Natural killer cell (primary cell): ENCODE measurements at regions of chr19 and their contacts with region 1.

Region 1: DNA sequence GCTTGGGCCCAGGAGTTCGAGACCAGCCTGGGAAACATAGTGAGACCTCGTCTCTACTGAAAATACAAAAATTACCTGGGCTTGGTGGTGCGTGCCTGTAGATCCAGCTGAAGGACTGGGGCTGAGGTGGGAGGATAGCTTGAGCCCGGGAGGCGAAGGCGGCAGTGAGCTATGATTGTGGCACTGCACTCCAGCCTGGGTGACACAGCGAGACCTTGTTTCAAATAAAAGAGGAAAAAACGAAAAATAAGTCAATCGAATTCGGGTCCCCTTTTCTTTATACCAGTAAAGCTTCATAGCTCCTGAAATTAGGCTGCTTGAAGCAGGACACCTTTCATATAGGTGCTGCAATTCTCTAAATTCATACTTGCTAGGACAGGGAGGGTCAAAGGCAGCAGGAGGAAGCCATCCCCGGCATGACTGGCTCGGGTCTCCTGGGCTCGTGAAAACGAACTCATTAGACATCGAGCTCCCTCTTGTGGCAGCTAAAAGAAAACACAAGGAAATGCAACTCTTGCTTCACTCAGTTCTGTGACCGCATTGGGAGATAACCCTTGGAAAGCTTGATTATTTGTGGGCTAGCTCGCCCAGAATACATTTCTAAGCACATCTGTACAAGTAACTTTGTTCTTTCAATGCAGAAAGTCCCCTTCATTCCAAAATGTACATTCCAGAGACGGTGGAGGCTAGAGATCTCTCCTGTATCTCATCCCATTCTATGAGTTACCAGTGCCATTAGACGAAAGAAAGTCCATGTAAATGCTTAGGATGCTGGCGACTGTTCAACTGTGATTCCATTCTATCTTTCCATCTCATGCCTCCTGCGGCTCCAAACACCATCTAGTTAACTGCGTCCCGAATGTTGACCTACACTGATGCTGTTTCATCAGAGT is 16.8 kb downstream of the FPR2 start:
- DNase-seq: peak in 1 of 2 donors; percentile 79
- ATAC-seq: peak; percentile 29 to 71 (median 67)
- H3K4me3 ChIP-seq: no peak overlapping the region
- H3K4me3 Mint-ChIP-seq: no peak overlapping the region
- H3K27ac ChIP-seq: no peak overlapping the region
- H3K27ac Mint-ChIP-seq: no peak overlapping the region
- H3K4me1 ChIP-seq: no peaks in the 10 kb centered on the region
- H3K4me1 Mint-ChIP-seq: peaks cover 5% of the 10 kb centered on the region in 2 donors
- H3K27me3 ChIP-seq: no peaks in the 10 kb centered on the region
- H3K27me3 Mint-ChIP-seq: peaks cover 28 to 50% of the 10 kb centered on the region in 2 donors
- CTCF ChIP-seq: peak; percentile 60

Region 2: DNA sequence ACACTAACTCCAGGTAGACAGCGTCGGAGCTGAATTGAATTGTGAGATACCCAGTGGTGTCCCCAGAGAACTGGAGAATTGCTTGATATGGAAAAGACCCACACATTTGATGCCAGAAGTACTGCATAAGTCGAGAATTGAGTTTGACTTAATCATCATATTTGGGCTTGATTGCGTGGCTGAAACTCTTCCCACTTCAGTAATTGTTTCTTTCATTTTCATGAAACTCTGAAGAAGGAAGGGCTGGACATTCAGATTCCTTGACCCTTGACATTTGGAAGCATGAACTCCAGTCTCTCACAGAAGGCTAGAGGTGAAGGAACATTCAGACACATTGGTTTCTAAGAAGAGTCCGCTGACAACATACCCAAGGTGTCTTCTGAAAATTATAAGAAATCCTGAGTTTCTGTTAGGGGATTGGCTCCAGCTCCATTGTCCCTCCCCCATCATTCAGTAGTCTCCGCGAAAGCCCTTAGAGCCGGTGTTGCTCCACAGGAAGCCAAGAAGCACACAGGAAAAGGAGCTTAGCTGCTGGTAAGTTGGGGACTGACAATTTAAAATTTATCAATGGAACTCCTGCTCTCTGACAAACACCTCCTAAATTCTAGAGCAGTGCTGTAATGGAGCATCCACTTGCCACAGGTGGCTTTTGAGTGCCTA is 17.0 kb before region 1 on chr19 and contains the start of gene FPR2:
- intact Hi-C with region 1: no loop called
- DNase-seq: no peak
- ATAC-seq: no peak
- H3K4me3 ChIP-seq: no peak within 1 kb of the TSS
- H3K4me3 Mint-ChIP-seq: no peak within 1 kb of the TSS
- H3K27ac ChIP-seq: no peak within 1 kb of the TSS
- H3K27ac Mint-ChIP-seq: no peak within 1 kb of the TSS
- H3K4me1 ChIP-seq: no peaks in the 10 kb centered on the region
- H3K4me1 Mint-ChIP-seq: peaks cover 0 to 5% of the 10 kb centered on the region in 2 donors
- H3K27me3 ChIP-seq: no peaks in the 10 kb centered on the region
- H3K27me3 Mint-ChIP-seq: peaks cover 13 to 17% of the 10 kb centered on the region in 2 donors
- CTCF ChIP-seq: no peak
- total RNA-seq, gene FPR2: 0.28 to 2.1 (median 0.59) TPM

Region 3: DNA sequence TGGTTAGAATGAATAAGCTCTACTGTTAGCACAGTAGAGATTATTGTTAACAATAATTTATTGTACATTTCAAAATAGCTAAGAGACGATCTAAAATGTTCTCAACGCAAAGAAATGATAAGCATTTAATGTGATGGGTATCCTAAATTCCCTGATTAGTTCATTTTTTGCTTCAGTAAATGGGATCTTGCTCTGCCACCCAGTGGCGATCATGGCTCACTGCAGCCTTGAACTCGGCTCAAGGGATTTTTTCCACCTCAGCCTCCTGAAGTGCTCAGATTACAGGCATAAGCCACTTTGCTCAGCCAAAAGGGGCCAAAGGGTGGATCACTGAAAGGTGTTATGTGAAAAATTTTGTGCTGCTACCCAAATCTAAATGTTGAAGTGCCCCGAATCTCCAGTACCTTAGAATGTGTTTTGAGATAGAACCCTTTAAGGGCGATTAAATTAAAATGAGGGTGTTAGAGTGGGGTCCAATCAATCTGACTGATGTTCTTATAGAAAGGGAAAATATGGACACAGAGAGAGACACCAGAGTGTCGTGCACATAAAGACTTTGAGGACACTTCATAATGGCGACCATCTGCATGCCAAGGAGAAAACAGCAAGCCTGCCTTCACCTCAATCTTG is 460.1 kb after region 1 on chr19:
- intact Hi-C with region 1: loop called (anchors 5 kb)
- DNase-seq: peak; percentile 52 to 80
- ATAC-seq: peak; percentile 86 to 99 (median 89)
- H3K4me3 ChIP-seq: no peak overlapping the region
- H3K4me3 Mint-ChIP-seq: no peak overlapping the region
- H3K27ac ChIP-seq: no peak overlapping the region
- H3K27ac Mint-ChIP-seq: no peak overlapping the region
- H3K4me1 ChIP-seq: no peaks in the 10 kb centered on the region
- H3K4me1 Mint-ChIP-seq: no peaks in the 10 kb centered on the region
- H3K27me3 ChIP-seq: no peaks in the 10 kb centered on the region
- H3K27me3 Mint-ChIP-seq: peaks cover 0 to 3% of the 10 kb centered on the region in 2 donors
- CTCF ChIP-seq: peak; percentile 94